ENCODE measurements at regions of chr2 and their contacts with region 1.

Region 1: DNA sequence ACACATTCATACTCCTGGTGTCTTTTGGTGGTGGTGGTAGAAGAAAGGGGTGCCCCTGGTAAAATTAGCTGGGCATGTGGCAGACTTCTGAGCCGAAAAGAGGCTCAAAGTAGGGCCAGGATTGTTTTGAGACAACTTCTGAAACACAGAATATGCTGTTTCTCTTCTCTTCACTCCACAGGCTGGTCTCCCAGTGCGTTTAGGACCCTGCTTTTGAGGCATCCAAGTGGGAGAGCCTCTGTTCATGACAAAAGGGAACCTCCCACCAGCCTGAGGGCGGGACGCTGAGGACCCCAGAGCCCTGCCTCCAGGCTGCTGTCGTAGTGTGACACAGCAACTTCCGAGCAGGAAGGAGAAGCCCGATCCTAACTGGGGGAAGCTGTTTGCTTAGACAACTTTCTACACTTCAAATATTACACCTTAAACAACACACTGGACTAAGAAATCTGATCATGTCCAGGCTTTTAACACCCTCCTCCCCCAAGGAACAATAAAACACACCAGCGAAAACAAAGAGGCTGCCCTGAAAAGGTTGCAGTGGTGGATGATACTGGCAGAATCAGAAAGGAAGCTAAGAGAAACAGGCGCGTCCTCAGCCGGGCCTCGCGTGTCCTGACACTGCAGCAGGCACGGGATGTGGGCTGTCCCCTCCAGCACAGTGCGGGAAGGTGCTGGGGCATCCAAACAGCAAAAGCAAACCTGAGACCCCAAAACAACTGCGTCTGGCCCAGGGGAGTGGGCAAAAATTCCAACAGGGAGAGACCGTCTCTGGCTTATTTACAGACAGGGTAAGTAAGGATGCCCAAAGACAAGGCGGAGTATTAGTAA is 9.3 kb downstream of the SERTAD2 start:
- DNase-seq: peak; percentile 64
- H3K4me3 Mint-ChIP-seq: peak overlapping the region; percentile 78
- H3K27ac Mint-ChIP-seq: peak overlapping the region; percentile 96
- H3K4me1 Mint-ChIP-seq: peaks cover 32% of the 10 kb centered on the region
- H3K27me3 Mint-ChIP-seq: no peaks in the 10 kb centered on the region
- CTCF ChIP-seq: no peak

Region 2: DNA sequence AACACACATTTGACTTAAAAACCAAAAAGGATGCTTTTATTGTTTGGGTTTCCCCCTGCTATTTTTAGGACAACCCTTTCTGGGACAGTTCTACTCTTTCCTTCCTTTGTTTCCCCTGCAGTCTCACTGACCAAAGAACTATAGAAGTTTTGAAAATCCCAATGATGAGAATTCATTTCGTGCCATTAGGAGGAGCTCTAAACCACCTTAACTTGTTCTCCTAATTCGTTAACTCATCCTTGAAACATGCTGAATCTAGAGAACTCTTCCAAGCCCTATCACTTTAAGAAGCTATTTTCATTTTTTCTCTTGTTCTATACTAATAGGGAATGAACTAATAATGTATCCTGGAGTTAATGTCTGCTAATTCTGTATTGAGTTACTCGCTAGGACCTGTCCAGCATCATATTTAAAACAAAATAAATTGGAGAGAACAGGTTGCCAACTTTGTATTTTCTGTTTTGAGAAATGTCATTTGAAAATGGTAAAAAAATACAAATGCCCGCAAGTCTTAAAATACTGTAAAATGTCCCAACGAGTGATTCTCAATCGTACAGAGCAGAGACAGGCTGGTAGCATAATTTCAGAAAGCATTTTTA is 57.4 kb before region 1 on chr2:
- CTCF ChIA-PET with region 1: interaction called, 11 read pairs
- POLR2A ChIA-PET with region 1: interaction called, 13 read pairs
- intact Hi-C with region 1: loop called (anchors 1 kb)
- DNase-seq: peak; percentile 59
- H3K4me3 Mint-ChIP-seq: no peak overlapping the region
- H3K27ac Mint-ChIP-seq: peak overlapping the region; percentile 57
- H3K4me1 Mint-ChIP-seq: no peaks in the 10 kb centered on the region
- H3K27me3 Mint-ChIP-seq: no peaks in the 10 kb centered on the region
- CTCF ChIP-seq: peak; percentile 67

Region 3: GRCh38 chr2:64730551-64731262 is 86.3 kb after region 1 on chr2:
- CTCF ChIA-PET with region 1: interaction called, 4 read pairs
- POLR2A ChIA-PET with region 1: interaction called, 11 read pairs
- intact Hi-C with region 1: no loop called
- DNase-seq: peak; percentile 81
- H3K4me3 Mint-ChIP-seq: peak overlapping the region; percentile 63
- H3K27ac Mint-ChIP-seq: peak overlapping the region; percentile 91
- H3K4me1 Mint-ChIP-seq: peaks cover 24% of the 10 kb centered on the region
- H3K27me3 Mint-ChIP-seq: no peaks in the 10 kb centered on the region
- CTCF ChIP-seq: no peak

Region 4: DNA sequence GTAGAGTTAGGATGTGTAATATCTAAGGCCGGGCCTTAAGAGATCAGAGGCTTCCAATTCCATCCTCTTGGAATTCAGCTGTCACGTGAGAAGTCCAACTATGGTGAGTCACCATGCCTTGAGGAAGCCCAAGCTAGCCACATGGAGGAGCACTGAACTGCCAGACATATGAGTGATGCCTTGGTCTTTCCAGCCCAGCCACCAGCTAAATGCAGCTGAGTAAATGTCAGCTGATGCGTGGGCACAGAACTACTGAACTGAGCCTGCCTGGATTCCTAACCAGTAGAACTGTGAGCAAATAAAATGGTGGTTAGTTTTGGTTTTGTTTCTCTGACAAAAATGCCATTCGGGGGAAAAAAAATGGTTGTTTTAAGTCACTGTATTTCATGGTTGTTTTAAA is 163.0 kb after region 1 on chr2:
- CTCF ChIA-PET with region 1: no interaction called
- POLR2A ChIA-PET with region 1: no interaction called
- intact Hi-C with region 1: loop called (anchors 1 kb)
- DNase-seq: peak; percentile 97
- H3K4me3 Mint-ChIP-seq: peak overlapping the region; percentile 34
- H3K27ac Mint-ChIP-seq: peak overlapping the region; percentile 71
- H3K4me1 Mint-ChIP-seq: peaks cover 17% of the 10 kb centered on the region
- H3K27me3 Mint-ChIP-seq: no peaks in the 10 kb centered on the region
- CTCF ChIP-seq: no peak

Region 5: DNA sequence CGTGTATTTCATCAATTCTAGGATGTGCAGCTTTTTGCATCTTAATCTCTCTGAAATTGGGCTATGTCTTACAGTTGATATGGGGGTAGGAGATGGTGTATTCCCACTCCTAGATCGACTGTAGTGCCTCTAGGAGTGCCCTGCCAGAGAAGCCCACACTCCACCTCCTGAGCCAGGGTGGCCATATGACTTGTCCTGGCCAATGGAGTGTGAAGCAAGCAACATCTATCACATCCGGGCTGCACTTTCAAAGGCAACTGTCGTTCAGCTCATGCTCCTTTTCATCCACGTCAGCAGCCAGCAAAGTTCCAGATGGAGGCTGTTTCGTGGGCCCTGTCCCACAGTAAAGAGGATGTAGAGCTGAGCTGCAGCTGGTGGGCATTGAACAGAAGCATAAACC is 195.5 kb after region 1 on chr2:
- CTCF ChIA-PET with region 1: interaction called, 5 read pairs
- POLR2A ChIA-PET with region 1: interaction called, 12 read pairs
- intact Hi-C with region 1: loop called (anchors 10 kb)
- DNase-seq: no peak
- H3K4me3 Mint-ChIP-seq: no peak overlapping the region
- H3K27ac Mint-ChIP-seq: no peak overlapping the region
- H3K4me1 Mint-ChIP-seq: peaks cover 41% of the 10 kb centered on the region
- H3K27me3 Mint-ChIP-seq: no peaks in the 10 kb centered on the region
- CTCF ChIP-seq: no peak

Region 6: DNA sequence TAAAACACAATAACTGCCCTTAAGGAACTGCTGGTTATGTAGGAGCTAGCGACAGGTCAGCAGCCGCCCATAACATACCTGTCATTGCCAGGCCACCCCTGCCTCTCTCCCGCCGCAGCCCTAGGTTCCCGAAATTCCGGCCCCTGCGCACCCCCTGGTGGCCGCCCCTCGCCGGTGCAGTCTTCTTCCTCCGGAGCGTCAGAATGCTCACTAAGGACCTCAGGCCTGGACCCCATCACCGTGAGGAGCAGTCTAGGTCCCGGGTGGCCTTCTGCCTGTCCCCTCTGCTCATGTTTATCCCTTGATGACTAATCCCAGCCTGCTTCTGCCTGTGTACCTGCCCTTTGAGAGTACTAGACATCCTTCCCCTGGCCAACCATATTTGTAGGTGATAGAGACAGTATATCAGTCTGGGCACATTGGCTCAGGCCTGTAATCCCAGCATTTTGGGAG is 229.1 kb after region 1 on chr2:
- CTCF ChIA-PET with region 1: interaction called, 21 read pairs
- POLR2A ChIA-PET with region 1: interaction called, 15 read pairs
- intact Hi-C with region 1: no loop called
- DNase-seq: peak; percentile 74
- H3K4me3 Mint-ChIP-seq: no peak overlapping the region
- H3K27ac Mint-ChIP-seq: no peak overlapping the region
- H3K4me1 Mint-ChIP-seq: peaks cover 15% of the 10 kb centered on the region
- H3K27me3 Mint-ChIP-seq: no peaks in the 10 kb centered on the region
- CTCF ChIP-seq: peak; percentile 93